BJ (cell line): ENCODE measurements at regions of chr12 and their contacts with region 1.

Region 1: DNA sequence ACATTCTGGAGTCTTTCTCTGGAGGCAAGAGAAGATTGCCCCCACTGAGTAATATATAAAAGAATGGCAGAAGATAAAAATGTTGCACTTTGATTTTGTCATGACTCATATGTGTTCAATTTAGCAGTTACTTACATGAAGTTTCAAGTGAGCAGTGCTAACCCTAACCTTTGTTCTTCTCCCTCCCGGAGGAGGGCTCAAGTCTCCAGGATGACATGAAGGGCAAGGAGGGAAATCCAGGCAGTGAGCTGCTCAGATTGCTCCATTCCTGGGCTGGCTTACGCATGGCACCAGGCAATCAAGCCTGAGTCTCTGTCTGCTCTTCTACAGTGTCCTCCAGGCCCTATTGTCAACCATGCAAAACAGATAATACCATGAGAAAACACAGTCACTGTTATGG is 322.3 kb downstream of the DUSP6 start:
- DNase-seq: no peak
- H3K4me3 ChIP-seq: no peak overlapping the region
- H3K27me3 ChIP-seq: no peaks in the 10 kb centered on the region
- CTCF ChIP-seq: no peak

Region 2: GRCh38 chr12:89019408-89020120 is 10.4 kb before region 1 on chr12:
- CTCF ChIA-PET with region 1: interaction called, 12 read pairs
- POLR2A ChIA-PET with region 1: no interaction called
- DNase-seq: peak; percentile 41
- H3K4me3 ChIP-seq: peak overlapping the region; percentile 34
- H3K27me3 ChIP-seq: no peaks in the 10 kb centered on the region
- CTCF ChIP-seq: peak; percentile 87

Region 3: DNA sequence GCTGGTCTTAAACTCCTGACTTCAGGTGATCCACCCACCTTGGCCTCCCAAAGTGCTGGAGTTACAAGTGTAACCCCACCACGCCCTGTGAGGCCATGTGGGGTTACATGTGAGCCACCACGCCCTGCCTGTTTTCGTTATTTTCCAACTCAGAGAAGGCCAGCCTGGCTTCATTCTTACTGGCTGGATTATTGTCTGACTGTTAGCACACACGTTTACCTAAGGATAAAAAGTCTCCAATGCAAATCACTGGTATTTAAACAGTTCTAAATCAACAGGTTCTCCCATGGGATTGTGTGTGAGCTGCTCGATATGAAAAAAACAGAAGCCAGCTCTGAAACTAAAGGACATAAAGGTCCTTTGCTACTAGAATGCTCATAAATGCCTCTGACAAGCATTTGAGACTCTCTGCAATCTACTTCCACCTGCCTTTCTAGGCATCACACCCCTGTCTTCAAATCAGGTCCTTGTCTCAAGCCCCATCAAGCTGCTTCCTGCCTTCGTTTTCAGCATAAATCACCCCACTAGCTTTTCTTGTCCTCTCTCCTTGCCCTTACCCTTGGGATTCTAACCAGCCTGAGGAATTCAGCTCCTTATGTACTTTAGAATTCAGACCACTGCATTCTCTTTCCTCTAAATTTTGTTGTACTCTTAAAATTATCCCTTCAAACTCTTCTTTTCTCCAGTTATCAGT is 57.3 kb after region 1 on chr12:
- CTCF ChIA-PET with region 1: no interaction called
- POLR2A ChIA-PET with region 1: no interaction called
- DNase-seq: no peak
- H3K4me3 ChIP-seq: no peak overlapping the region
- H3K27me3 ChIP-seq: no peaks in the 10 kb centered on the region
- CTCF ChIP-seq: no peak